ENCODE measurements at regions of chr3 and their contacts with region 1.

Region 1: DNA sequence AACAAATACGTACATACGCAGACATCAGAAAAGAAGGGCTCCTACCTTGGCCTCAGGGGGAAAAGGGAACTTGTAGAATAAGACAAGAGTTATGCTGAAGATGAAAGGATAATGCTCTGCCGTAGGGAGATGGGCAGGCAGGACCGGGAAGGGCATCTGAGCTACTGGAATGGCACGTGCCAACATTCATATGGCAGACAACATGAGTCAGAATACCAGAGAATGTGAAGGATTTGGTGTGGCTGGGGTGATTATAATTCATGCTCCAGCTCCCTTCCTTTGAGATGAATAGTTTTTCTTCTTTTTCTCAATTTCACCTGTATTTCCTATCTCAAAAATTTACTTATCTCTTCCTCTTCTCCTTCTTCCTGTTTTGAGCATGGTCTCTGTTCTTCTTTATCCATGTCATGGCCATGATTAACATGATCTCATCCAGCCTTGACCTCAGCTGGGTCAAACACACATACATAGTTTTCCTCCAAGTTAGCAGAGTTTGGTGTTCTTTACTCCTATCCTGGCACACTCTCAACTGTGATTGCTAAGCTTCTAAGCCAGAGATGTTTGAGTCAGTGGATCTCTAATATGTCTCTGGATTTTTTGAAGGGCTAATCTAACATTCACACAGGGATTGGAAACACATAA is 507.0 kb downstream of the FOXP1 start:
- DNase-seq: no peak
- ATAC-seq: no peak
- H3K4me3 ChIP-seq: no peak overlapping the region
- H3K27ac ChIP-seq: no peak overlapping the region
- H3K4me1 ChIP-seq: peaks cover 2% of the 10 kb centered on the region
- H3K27me3 ChIP-seq: no peaks in the 10 kb centered on the region
- CTCF ChIP-seq: no peak

Region 2: DNA sequence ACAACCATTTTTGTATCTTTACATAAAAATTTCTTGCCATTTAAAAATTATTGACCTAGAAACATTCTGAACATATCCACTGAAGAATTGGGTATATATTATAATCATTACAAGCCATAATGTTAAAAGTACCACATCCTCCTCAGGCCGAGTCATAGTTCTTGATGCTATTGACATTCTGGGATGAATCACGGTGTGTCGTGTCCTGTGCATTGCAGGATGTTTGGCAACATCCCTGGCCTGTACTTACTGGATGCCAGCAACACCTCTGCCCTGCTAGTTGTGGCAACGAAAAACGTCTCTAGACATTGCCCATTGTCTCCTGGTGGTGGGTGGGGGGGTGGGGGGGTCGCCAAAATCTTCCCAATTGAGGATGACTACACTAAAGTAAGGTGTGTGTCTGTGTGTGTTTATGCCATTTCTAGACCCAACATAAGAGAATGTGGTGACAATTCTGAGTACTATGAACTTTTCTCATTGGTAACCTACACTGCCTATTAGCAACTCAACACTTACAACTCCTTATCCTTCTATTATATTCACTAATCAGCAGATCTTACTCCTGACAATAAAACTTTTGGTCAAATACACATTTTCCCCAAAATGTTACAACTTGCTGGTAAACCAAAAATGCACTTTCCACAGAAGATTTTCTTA is 35.4 kb after region 1 on chr3:
- intact Hi-C with region 1: loop called in 1 of 2 experiments (anchors 5 kb)
- DNase-seq: no peak
- ATAC-seq: no peak
- H3K4me3 ChIP-seq: no peak overlapping the region
- H3K27ac ChIP-seq: no peak overlapping the region
- H3K4me1 ChIP-seq: no peaks in the 10 kb centered on the region
- H3K27me3 ChIP-seq: no peaks in the 10 kb centered on the region
- CTCF ChIP-seq: no peak

Region 3: DNA sequence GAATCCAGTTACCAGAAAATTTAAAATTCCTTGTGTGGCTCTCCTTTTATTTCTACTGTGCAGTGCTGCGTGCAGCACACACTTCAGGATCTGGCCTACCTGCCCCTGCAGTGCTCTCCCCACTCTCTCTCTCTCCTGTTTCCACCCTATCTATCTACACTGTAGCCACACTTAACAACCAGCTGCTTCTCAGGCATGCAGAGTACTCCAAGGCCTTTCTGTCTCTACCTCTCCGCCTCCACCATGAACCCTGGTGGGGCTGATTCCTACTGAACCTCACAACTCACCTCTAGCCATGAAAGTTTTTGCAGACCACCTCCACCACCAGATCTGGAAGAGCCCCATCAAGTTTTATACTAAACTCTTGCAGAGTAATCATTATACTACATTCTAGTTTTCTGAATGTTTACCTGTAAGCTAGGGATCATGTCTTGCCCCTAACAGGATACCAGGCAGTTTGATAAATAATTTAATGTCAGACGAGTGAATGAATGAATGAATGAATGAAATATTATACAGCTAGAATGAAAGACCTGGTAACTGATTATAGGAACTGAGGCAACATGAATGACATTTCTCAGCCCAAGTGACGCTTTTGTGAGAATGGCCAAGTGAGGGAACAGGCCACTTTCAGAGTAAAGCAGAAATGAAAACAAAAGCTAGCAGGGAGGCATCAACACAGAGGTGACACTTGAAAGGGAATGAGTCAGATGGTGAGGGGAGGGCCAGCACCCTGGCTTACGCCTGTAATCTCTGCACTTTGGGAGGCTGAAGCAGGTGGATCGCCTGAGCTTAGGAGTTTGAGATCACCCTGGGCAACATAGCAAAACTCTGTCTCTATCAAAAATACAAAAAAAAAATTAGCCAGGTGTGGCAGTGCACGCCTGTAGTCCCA is 143.5 kb after region 1 on chr3:
- intact Hi-C with region 1: no loop called
- DNase-seq: no peak
- ATAC-seq: no peak
- H3K4me3 ChIP-seq: no peak overlapping the region
- H3K27ac ChIP-seq: no peak overlapping the region
- H3K4me1 ChIP-seq: no peaks in the 10 kb centered on the region
- H3K27me3 ChIP-seq: no peaks in the 10 kb centered on the region
- CTCF ChIP-seq: no peak

Measured in psoas muscle (tissue), 8 donors.